ENCODE measurements at regions of chr9 and their contacts with region 1.

Region 1: GRCh38 chr9:109918339-109919163 is 138.6 kb downstream of the PALM2AKAP2 start:
- DNase-seq: no peak
- ATAC-seq: peak; percentile 72
- H3K4me3 Mint-ChIP-seq: peak overlapping the region; percentile 58
- H3K27ac Mint-ChIP-seq: peak overlapping the region; percentile 96
- H3K4me1 Mint-ChIP-seq: peaks cover 87% of the 10 kb centered on the region
- H3K27me3 Mint-ChIP-seq: no peaks in the 10 kb centered on the region
- CTCF ChIP-seq: no peak

Region 2: DNA sequence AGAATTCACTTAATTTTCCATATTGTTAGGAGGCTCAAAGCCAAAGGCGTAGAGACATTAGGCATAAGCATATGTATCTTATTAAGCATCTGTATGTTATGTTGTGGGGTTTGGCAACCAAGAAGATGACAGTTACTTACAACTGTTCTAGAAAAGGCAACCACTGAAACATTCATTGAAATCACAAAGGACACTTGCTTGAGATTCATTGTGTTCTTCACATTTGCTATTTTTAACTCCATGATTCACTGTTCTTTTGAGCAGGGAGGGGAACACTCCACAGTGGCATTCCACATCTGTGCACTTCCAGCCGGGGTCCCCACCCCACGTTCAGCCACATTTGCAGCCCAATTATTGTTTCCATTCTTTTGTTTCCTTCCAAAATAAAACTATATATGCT is 31.5 kb before region 1 on chr9:
- CTCF ChIA-PET with region 1: no interaction called
- POLR2A ChIA-PET with region 1: no interaction called
- intact Hi-C with region 1: no loop called
- DNase-seq: no peak
- ATAC-seq: no peak
- H3K4me3 Mint-ChIP-seq: no peak overlapping the region
- H3K27ac Mint-ChIP-seq: no peak overlapping the region
- H3K4me1 Mint-ChIP-seq: peaks cover 6% of the 10 kb centered on the region
- H3K27me3 Mint-ChIP-seq: no peaks in the 10 kb centered on the region
- CTCF ChIP-seq: no peak

Region 3: DNA sequence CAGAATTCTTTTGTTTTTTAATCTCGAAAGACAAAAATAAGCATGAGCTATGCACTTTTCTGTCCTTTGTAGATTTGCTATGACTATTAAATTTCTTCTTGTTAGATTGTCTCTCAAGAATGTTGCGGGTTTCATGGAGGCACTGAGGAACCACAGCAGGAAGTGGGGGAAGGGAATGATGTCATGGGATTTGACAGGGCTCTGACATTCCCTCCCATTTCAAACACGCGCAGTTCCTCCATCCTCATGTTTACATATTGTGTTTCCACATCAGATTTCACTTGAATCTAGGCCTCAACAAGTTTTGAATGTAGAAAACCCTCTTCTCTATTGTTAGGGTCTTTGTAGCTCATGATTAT is 16.3 kb after region 1 on chr9:
- CTCF ChIA-PET with region 1: no interaction called
- POLR2A ChIA-PET with region 1: interaction called, 5 read pairs
- intact Hi-C with region 1: loop called (anchors 2 kb)
- DNase-seq: no peak
- ATAC-seq: no peak
- H3K4me3 Mint-ChIP-seq: no peak overlapping the region
- H3K27ac Mint-ChIP-seq: peak overlapping the region; percentile 48
- H3K4me1 Mint-ChIP-seq: peaks cover 39% of the 10 kb centered on the region
- H3K27me3 Mint-ChIP-seq: no peaks in the 10 kb centered on the region
- CTCF ChIP-seq: no peak

Region 4: GRCh38 chr9:109953813-109954497 is 35.4 kb after region 1 on chr9:
- CTCF ChIA-PET with region 1: interaction called, 3 read pairs
- POLR2A ChIA-PET with region 1: interaction called, 10 read pairs
- intact Hi-C with region 1: no loop called
- DNase-seq: no peak
- ATAC-seq: peak; percentile 75
- H3K4me3 Mint-ChIP-seq: no peak overlapping the region
- H3K27ac Mint-ChIP-seq: peak overlapping the region; percentile 63
- H3K4me1 Mint-ChIP-seq: peaks cover 61% of the 10 kb centered on the region
- H3K27me3 Mint-ChIP-seq: no peaks in the 10 kb centered on the region
- CTCF ChIP-seq: no peak

Region 5: GRCh38 chr9:110007477-110008270 is 89.1 kb after region 1 on chr9:
- CTCF ChIA-PET with region 1: no interaction called
- POLR2A ChIA-PET with region 1: interaction called, 12 read pairs
- intact Hi-C with region 1: no loop called
- DNase-seq: no peak
- ATAC-seq: no peak
- H3K4me3 Mint-ChIP-seq: no peak overlapping the region
- H3K27ac Mint-ChIP-seq: peak overlapping the region; percentile 39
- H3K4me1 Mint-ChIP-seq: peaks cover 42% of the 10 kb centered on the region
- H3K27me3 Mint-ChIP-seq: no peaks in the 10 kb centered on the region
- CTCF ChIP-seq: no peak

Region 6: DNA sequence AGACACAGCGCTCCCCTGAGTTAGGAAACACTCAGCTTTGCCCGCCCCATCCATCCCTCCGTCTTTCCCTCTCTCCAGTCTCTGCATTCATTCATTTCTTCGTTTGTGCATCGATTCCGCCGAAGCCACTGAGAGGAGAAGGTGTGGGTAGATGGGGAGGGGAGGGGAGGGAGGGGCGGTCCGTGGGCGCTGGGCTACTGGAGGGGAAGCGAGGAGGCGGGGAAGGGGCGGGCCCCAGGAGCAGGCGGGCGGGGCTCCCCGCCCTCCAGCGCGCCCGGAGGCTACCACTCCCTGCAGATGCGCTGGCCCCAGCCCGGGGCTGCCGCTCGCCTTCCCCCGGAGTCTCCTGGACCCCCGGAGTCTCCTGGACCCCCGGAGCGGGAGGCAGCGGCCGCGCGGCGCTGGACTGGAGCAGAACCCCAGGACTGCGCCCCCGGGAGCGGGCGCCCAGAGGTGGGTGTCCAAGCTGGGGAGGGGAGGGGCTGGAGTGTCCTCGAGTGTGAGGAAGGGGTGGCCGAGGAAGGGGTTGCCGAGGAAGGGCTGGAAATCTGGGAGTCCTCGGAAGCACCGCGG is 129.9 kb after region 1 on chr9:
- CTCF ChIA-PET with region 1: no interaction called
- POLR2A ChIA-PET with region 1: interaction called, 124 read pairs
- intact Hi-C with region 1: loop called (anchors 2 kb)
- DNase-seq: peak; percentile 85
- ATAC-seq: peak; percentile 94
- H3K4me3 Mint-ChIP-seq: peak overlapping the region; percentile 99
- H3K27ac Mint-ChIP-seq: peak overlapping the region; percentile 91
- H3K4me1 Mint-ChIP-seq: peaks cover 54% of the 10 kb centered on the region
- H3K27me3 Mint-ChIP-seq: no peaks in the 10 kb centered on the region
- CTCF ChIP-seq: no peak

Measured in activated B cell treated with CpG ODN at 0.5 μM for 24 hours (primary cell).